Posterior cingulate gyrus (tissue), 11 donors: ENCODE measurements at regions of chr12 and their contacts with region 1.

Region 1: GRCh38 chr12:10331642-10332239 is 24.1 kb downstream of the KLRD1 start:
- DNase-seq: no peak

Region 2: DNA sequence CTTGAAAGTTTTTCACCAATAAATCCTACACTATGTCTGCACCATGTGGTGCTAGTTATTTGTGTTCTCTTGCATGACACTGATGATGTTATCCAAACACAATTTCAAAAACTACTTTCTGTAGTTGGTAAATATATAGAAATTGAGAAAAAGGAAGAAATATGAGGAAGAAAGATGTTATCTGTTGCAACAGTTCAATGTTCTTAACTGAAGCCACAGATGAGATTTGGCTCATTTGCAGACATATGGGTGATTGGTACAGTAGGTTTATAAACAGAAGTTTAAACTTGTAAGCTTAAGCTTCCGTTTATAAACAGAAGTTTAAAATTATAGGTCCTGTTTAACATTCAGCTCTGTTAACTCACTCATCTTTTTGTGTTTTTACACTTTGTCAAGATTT is 360.6 kb before region 1 on chr12 and contains the start of gene CLEC12A:
- intact Hi-C with region 1: no loop called
- DNase-seq: no peak

Region 3: DNA sequence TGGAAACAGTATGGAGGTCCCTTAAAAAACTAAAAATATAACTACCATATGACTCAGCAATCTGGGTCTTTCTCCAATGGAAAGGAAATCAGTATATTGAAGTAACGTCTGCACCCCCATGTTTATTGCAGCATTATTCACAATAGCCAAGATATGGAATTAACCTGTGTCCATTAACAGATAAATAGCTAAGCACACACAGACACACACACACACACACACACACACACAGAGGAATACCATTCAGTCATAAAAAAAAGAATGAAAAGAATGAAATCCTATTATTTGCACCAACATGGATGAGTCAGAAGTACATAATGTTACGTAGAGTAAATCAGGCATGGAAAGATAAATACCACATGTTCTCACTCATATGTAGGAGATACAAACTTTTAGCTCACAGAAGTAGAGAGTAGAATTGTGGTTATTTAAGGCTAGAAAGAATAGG is 53.4 kb after region 1 on chr12:
- intact Hi-C with region 1: no loop called
- DNase-seq: no peak

Region 4: DNA sequence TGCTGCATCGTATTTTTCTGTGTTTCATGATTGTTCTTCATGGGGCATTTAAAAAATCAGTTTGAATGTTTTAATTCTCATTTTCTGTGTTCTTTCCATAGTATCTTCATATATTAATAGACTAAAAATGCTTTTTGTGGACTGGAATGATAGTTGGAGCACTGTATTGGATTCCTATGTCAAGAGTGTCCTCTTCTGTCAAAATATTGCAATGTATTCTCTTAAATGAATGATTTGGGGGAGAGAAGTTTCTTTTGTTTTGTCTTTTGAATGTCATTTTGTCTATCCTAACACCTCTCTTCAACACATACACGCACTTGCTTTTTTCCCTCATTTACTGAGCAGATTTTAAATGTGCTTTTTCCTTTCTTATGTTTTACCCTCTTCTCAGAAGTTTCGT is 169.3 kb after region 1 on chr12:
- intact Hi-C with region 1: loop called (anchors 1 kb)
- DNase-seq: no peak